Natural killer cell (primary cell): ENCODE measurements at regions of chr15 and their contacts with region 1.

Region 1: GRCh38 chr15:33086507-33087121 is 107.9 kb downstream of the FMN1 start:
- DNase-seq: peak in 1 of 2 donors; percentile 73
- ATAC-seq: peak; percentile 66 to 75 (median 71)
- H3K4me3 ChIP-seq: no peak overlapping the region
- H3K4me3 Mint-ChIP-seq: no peak overlapping the region
- H3K27ac ChIP-seq: no peak overlapping the region
- H3K27ac Mint-ChIP-seq: no peak overlapping the region
- H3K4me1 ChIP-seq: no peaks in the 10 kb centered on the region
- H3K4me1 Mint-ChIP-seq: no peaks in the 10 kb centered on the region
- H3K27me3 ChIP-seq: no peaks in the 10 kb centered on the region
- H3K27me3 Mint-ChIP-seq: peaks cover 0 to 3% of the 10 kb centered on the region in 2 donors
- CTCF ChIP-seq: peak; percentile 65

Region 2: DNA sequence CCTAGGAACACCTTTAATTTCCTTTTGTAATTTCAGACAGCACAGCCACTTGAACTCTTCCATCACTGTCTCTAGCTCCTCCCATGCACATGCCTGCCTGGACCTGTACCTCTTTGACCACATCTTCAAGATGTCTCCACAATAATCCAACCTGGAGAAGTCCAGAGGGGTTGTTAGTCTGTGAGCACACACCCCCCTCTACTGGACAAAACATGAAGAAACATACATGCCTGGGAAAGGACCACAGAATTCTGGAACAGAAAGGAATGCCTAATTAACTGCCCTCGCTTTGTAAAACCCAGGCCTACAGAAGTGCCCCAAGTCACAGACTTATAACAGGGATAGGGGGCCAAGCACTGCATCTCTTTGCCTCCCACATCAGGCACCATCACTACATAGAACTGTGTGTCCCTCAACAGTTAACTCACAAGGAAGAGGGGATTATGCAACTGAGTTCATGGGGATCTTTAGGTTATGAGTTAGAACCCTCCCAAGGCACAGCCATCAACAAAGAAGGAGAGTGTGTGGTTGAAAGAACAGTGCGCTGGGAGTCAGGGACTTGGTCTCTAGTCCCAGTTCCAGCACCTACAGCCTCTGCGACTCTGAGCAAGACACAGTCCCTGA is 46.2 kb after region 1 on chr15:
- intact Hi-C with region 1: loop called (anchors 1 kb)
- DNase-seq: peak in 1 of 2 donors; percentile 59
- ATAC-seq: no peak
- H3K4me3 ChIP-seq: no peak overlapping the region
- H3K4me3 Mint-ChIP-seq: no peak overlapping the region
- H3K27ac ChIP-seq: no peak overlapping the region
- H3K27ac Mint-ChIP-seq: no peak overlapping the region
- H3K4me1 ChIP-seq: no peaks in the 10 kb centered on the region
- H3K4me1 Mint-ChIP-seq: peaks cover 0 to 7% of the 10 kb centered on the region in 2 donors
- H3K27me3 ChIP-seq: no peaks in the 10 kb centered on the region
- H3K27me3 Mint-ChIP-seq: peaks cover 0 to 26% of the 10 kb centered on the region in 2 donors
- CTCF ChIP-seq: peak; percentile 51

Region 3: GRCh38 chr15:33145447-33145846 is 58.8 kb after region 1 on chr15:
- intact Hi-C with region 1: no loop called
- DNase-seq: no peak
- ATAC-seq: no peak
- H3K4me3 ChIP-seq: no peak overlapping the region
- H3K4me3 Mint-ChIP-seq: no peak overlapping the region
- H3K27ac ChIP-seq: no peak overlapping the region
- H3K27ac Mint-ChIP-seq: no peak overlapping the region
- H3K4me1 ChIP-seq: peaks cover 5% of the 10 kb centered on the region
- H3K4me1 Mint-ChIP-seq: peaks cover 12 to 13% of the 10 kb centered on the region in 2 donors
- H3K27me3 ChIP-seq: peaks cover 2% of the 10 kb centered on the region
- H3K27me3 Mint-ChIP-seq: peaks cover 16 to 32% of the 10 kb centered on the region in 2 donors
- CTCF ChIP-seq: no peak

Region 4: DNA sequence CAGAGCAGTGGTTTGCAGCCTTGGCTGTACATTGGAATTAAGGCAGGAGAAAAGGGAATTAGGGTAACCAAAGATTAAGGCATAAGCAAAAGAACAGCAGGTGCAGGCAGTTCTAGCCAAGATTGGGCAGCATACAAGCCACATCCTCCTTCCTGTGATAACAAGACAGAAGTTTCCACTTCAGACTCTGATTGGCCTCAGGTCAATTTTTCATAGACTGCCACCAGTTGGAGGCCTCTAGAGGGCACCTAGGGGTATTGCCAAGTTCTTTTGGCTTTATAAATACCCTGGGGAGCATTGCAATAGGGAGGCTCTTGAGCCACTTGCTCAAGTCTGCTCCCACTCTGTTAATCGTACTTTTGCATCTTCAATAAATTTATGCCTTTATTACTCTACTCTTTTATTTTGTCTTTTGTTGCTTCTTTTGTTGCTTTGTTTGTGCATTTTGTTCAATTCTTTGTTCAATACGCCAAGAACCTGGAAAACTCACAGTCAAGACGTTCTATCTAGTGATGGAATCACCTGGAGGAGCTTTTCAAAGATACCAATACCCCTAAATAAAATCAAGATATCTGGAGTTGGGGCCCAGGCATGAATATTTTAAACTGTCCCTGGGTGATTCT is 140.1 kb after region 1 on chr15:
- intact Hi-C with region 1: loop called (anchors 5 kb)
- DNase-seq: peak; percentile 40 to 85
- ATAC-seq: peak; percentile 94 to 99 (median 96)
- H3K4me3 ChIP-seq: no peak overlapping the region
- H3K4me3 Mint-ChIP-seq: no peak overlapping the region
- H3K27ac ChIP-seq: no peak overlapping the region
- H3K27ac Mint-ChIP-seq: peak overlapping the region in 1 of 2 donors; percentile 42
- H3K4me1 ChIP-seq: peaks cover 9% of the 10 kb centered on the region
- H3K4me1 Mint-ChIP-seq: peaks cover 0 to 22% of the 10 kb centered on the region in 2 donors
- H3K27me3 ChIP-seq: no peaks in the 10 kb centered on the region
- H3K27me3 Mint-ChIP-seq: no peaks in the 10 kb centered on the region
- CTCF ChIP-seq: peak; percentile 75

Region 5: DNA sequence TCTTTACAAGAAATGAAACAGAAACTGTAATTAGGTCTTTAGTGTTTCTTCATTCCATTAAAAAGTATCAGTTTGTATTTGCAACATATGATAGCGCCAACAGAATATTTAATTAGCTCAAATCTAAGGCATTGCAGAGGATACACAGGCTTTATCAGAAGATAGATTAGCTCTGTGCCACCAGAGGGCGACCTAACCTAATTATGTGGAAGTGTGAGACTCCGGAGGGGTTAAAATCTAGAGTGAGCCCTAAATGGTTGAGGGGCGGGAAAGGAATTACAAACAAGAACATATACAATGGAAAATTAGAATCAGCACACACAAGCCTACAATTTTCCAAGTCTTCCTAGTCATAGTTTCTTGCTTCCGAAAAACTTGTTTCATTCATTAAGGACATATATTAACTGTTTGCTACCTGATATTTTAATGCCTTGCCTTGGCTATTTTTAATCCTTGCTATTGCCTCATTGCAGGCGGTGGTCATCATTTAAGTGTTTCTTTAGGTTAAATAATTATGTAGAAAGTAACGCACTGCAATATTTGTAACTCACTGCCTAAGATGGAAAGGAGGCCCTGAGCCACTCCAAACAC is 206.2 kb after region 1 on chr15:
- intact Hi-C with region 1: loop called (anchors 5 kb)
- DNase-seq: peak in 1 of 2 donors; percentile 48
- ATAC-seq: no peak
- H3K4me3 ChIP-seq: no peak overlapping the region
- H3K4me3 Mint-ChIP-seq: no peak overlapping the region
- H3K27ac ChIP-seq: no peak overlapping the region
- H3K27ac Mint-ChIP-seq: no peak overlapping the region
- H3K4me1 ChIP-seq: no peaks in the 10 kb centered on the region
- H3K4me1 Mint-ChIP-seq: no peaks in the 10 kb centered on the region
- H3K27me3 ChIP-seq: no peaks in the 10 kb centered on the region
- H3K27me3 Mint-ChIP-seq: peaks cover under 1 to 5% of the 10 kb centered on the region in 2 donors
- CTCF ChIP-seq: peak; percentile 50